Ovary (tissue), 10 donors: ENCODE measurements at regions of chr19 and their contacts with region 1.

Region 1: GRCh38 chr19:54281007-54281728 is at the start of gene LILRB2:
- DNase-seq: no peak
- H3K4me3 ChIP-seq: no peak within 1 kb of the TSS
- H3K27ac ChIP-seq: no peak within 1 kb of the TSS
- H3K4me1 ChIP-seq: no peaks in the 10 kb centered on the region
- H3K27me3 ChIP-seq: no peaks in the 10 kb centered on the region
- CTCF ChIP-seq: no peak
- EP300 ChIP-seq: no peak
- POLR2A ChIP-seq: no peak
- total RNA-seq, gene LILRB2: 0.24 to 15.1 (median 2.1) TPM

Region 2: GRCh38 chr19:52922841-52923777 is 1358.1 kb before region 1 on chr19 and contains the start of gene ZNF888:
- intact Hi-C with region 1: no loop called
- DNase-seq: peak; percentile 87 to 93 (median 90)
- H3K4me3 ChIP-seq: peak within 1 kb of the TSS; percentile 60
- H3K27ac ChIP-seq: peak within 1 kb of the TSS in 1 of 2 donors; percentile 63
- H3K4me1 ChIP-seq: peaks cover 2% of the 10 kb centered on the region
- H3K27me3 ChIP-seq: no peaks in the 10 kb centered on the region
- CTCF ChIP-seq: no peak
- EP300 ChIP-seq: no peak
- POLR2A ChIP-seq: peak; percentile 23
- total RNA-seq, gene ZNF888: 3.4 to 7.9 (median 4.5) TPM

Region 3: GRCh38 chr19:54586397-54586796 is 305.2 kb after region 1 on chr19:
- intact Hi-C with region 1: loop called in 1 of 4 experiments (anchors 2 kb)
- DNase-seq: no peak
- H3K4me3 ChIP-seq: no peak overlapping the region
- H3K27ac ChIP-seq: no peak overlapping the region
- H3K4me1 ChIP-seq: no peaks in the 10 kb centered on the region
- H3K27me3 ChIP-seq: no peaks in the 10 kb centered on the region
- CTCF ChIP-seq: no peak
- EP300 ChIP-seq: no peak
- POLR2A ChIP-seq: no peak

Region 4: DNA sequence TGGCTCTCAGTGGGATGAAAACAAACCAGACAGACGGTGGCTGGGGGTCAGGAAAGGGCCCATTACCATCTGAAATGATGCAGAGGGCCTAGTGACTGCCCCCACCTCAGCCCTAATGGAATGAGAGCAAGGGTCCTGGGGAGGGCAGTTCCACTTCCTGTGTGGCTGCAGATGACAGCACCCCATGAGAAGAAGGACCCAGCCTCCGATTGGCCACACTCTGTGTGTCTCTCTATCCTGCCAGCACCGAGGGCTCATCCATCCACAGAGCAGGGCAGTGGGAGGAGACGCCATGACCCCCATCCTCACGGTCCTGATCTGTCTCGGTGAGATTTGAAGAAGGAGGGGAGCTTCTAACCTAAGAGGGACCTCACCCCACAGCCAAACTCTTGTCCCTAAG is 349.6 kb after region 1 on chr19:
- intact Hi-C with region 1: loop called in 1 of 4 experiments (anchors 5 kb)
- DNase-seq: no peak
- H3K4me3 ChIP-seq: no peak overlapping the region
- H3K27ac ChIP-seq: no peak overlapping the region
- H3K4me1 ChIP-seq: no peaks in the 10 kb centered on the region
- H3K27me3 ChIP-seq: no peaks in the 10 kb centered on the region
- CTCF ChIP-seq: no peak
- EP300 ChIP-seq: no peak
- POLR2A ChIP-seq: no peak